ENCODE measurements at regions of chr21 and their contacts with region 1.

Region 1: GRCh38 chr21:44932408-44933181 is 7.2 kb upstream of the SLX9 start:
- DNase-seq: no peak
- H3K4me3 ChIP-seq: peak overlapping the region; percentile 52 to 65 (median 62)
- H3K27ac ChIP-seq: peak overlapping the region in 1 of 4 donors; percentile 29
- H3K4me1 ChIP-seq: peaks cover 24 to 43% (median 32%) of the 10 kb centered on the region in 4 donors
- H3K27me3 ChIP-seq: peaks cover 4 to 73% (median 25%) of the 10 kb centered on the region in 4 donors
- CTCF ChIP-seq: peak; percentile 63 to 79 (median 69)
- EP300 ChIP-seq: no peak
- POLR2A ChIP-seq: no peak

Region 2: DNA sequence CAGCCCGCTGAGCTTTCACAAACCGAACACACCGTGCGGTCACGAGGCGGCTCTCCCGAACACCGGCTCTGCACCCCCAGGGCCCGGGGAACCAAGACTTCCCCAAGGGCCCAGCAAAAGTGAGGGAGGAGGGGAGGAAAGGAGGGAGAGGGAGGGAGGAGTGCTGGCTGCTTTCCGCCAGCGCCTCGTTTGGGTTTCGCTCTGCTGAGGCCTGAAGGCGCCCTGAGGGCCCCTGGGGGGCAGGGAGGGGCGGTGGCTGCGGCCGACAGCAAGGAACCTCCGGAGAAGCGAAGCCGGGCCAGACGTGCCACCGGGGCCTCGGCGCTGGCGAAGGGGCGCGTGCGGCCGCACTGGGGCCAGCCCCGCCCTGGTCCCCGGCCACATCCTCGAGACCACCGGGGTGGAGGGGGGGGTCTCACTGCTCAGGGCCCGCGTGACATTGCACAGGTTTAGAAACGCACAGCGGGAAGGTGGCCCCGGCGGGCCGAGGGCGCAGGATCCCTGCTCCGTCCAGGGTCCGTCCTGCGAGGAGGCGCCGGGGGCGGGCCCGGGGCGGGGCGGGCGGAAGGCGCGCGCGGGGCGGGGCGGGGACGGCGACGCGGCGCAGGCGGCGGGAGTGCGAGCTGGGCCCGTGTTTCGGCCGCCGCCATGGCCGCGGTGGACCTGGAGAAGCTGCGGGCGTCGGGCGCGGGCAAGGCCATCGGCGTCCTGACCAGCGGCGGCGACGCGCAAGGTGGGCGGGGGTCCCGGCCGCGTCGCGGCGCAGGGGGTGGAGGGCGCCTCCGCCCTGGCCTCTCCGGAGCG is 632.9 kb before region 1 on chr21 and contains the start of gene PFKL:
- intact Hi-C with region 1: no loop called
- DNase-seq: no peak
- H3K4me3 ChIP-seq: peak within 1 kb of the TSS; percentile 93 to 98 (median 96)
- H3K27ac ChIP-seq: peak within 1 kb of the TSS; percentile 89 to 93 (median 93)
- H3K4me1 ChIP-seq: peaks cover 59 to 81% (median 70%) of the 10 kb centered on the region in 4 donors
- H3K27me3 ChIP-seq: peaks cover 0 to 25% (median 0%) of the 10 kb centered on the region in 4 donors
- CTCF ChIP-seq: no peak
- EP300 ChIP-seq: no peak
- POLR2A ChIP-seq: no peak
- total RNA-seq, gene PFKL: 61.5 to 109 (median 83.4) TPM

Region 3: GRCh38 chr21:44583089-44583799 is 349.4 kb before region 1 on chr21:
- intact Hi-C with region 1: no loop called
- DNase-seq: peak; percentile 80
- H3K4me3 ChIP-seq: no peak overlapping the region
- H3K27ac ChIP-seq: no peak overlapping the region
- H3K4me1 ChIP-seq: peaks cover 0 to 16% (median 5%) of the 10 kb centered on the region in 4 donors
- H3K27me3 ChIP-seq: peaks cover 0 to 38% (median 0%) of the 10 kb centered on the region in 4 donors
- CTCF ChIP-seq: no peak
- EP300 ChIP-seq: no peak
- POLR2A ChIP-seq: no peak

Region 4: GRCh38 chr21:44801468-44802395 is 130.9 kb before region 1 on chr21 and contains the start of gene UBE2G2:
- intact Hi-C with region 1: loop called (anchors 5 kb)
- DNase-seq: peak; percentile 94
- H3K4me3 ChIP-seq: peak within 1 kb of the TSS; percentile 82 to 99 (median 94)
- H3K27ac ChIP-seq: peak within 1 kb of the TSS; percentile 76 to 87 (median 81)
- H3K4me1 ChIP-seq: peaks cover 28 to 43% (median 36%) of the 10 kb centered on the region in 4 donors
- H3K27me3 ChIP-seq: no peaks in the 10 kb centered on the region
- CTCF ChIP-seq: no peak
- EP300 ChIP-seq: no peak
- POLR2A ChIP-seq: peak; percentile 66
- total RNA-seq, gene UBE2G2: 74.4 to 174 (median 81.7) TPM

Region 5: GRCh38 chr21:44817506-44817880 is 115.1 kb before region 1 on chr21:
- intact Hi-C with region 1: loop called (anchors 5 kb)
- DNase-seq: peak; percentile 95
- H3K4me3 ChIP-seq: peak overlapping the region; percentile 73 to 92 (median 85)
- H3K27ac ChIP-seq: peak overlapping the region; percentile 85 to 93 (median 90)
- H3K4me1 ChIP-seq: peaks cover 24 to 46% (median 39%) of the 10 kb centered on the region in 4 donors
- H3K27me3 ChIP-seq: no peaks in the 10 kb centered on the region
- CTCF ChIP-seq: no peak
- EP300 ChIP-seq: no peak
- POLR2A ChIP-seq: no peak

Region 6: GRCh38 chr21:44892536-44893277 is 39.9 kb before region 1 on chr21:
- intact Hi-C with region 1: loop called (anchors 5 kb)
- DNase-seq: no peak
- H3K4me3 ChIP-seq: no peak overlapping the region
- H3K27ac ChIP-seq: no peak overlapping the region
- H3K4me1 ChIP-seq: no peaks in the 10 kb centered on the region
- H3K27me3 ChIP-seq: peaks cover 0 to 33% (median 0%) of the 10 kb centered on the region in 4 donors
- CTCF ChIP-seq: peak; percentile 74 to 92 (median 85)
- EP300 ChIP-seq: no peak
- POLR2A ChIP-seq: no peak

Region 7: GRCh38 chr21:45000977-45001728 is 68.6 kb after region 1 on chr21:
- intact Hi-C with region 1: no loop called
- DNase-seq: no peak
- H3K4me3 ChIP-seq: peak overlapping the region in 1 of 4 donors; percentile 6
- H3K27ac ChIP-seq: peak overlapping the region; percentile 60 to 79 (median 74)
- H3K4me1 ChIP-seq: peaks cover 16 to 85% (median 71%) of the 10 kb centered on the region in 4 donors
- H3K27me3 ChIP-seq: no peaks in the 10 kb centered on the region
- CTCF ChIP-seq: no peak
- EP300 ChIP-seq: no peak
- POLR2A ChIP-seq: no peak